ENCODE measurements at regions of chr2 and their contacts with region 1.

Region 1: DNA sequence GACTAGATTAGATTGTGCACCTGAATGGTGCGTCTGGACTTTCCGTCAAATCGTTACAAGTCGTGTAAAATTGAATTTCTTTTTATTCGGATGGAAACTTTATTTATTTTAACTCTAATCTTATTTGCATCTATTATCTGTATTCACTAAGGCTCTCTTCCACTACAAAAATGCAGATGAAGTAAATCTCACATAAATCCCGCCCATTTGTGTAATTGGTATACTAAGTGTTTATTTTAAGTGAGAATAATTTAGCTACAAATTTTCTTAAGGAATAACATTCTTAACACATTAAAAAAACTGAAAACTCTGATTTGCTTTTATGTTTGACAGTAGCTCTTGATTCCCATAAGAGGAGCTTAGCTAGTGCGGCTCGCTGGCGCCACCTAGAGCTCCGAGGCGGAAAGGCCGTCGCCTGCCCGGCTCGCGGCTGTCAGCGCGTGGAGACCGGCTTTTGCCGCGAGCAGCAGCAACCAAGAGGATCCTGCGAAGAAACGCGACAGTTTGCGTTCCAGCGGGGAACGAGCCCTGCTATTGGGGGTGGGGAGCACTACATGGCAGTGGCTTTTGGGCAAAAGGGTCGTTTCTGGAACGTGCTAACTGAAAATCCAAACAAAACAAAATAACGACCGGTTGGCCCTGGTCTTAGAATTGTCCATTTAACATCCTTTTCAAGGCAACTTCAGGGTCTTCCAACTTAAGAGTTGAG is 6.7 kb downstream of the SP9 start:
- DNase-seq: peak; percentile 41
- ATAC-seq: peak; percentile 93
- H3K4me3 ChIP-seq: peak overlapping the region; percentile 36 to 55
- H3K27ac ChIP-seq: no peak overlapping the region
- H3K4me1 ChIP-seq: peaks cover 10% of the 10 kb centered on the region
- H3K27me3 ChIP-seq: no peaks in the 10 kb centered on the region
- CTCF ChIP-seq: peak; percentile 98

Region 2: DNA sequence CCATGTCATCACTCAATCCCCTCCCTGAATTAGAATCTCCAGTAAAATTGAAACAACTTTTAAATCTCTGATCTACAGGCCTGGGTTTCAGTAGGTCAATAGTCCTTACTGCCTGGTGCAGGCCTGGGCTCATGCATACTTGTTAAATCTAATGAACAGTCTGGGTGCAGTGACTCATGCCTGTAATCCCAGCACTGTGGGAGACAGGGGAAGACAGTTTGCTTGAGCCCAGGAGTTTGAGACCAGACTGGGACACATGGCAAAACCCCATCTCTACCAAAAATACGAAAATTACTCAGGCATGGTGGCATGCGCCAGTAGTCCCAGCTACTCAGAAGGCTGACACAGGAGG is 281.6 kb before region 1 on chr2:
- CTCF ChIA-PET with region 1: interaction called, 3 read pairs
- POLR2A ChIA-PET with region 1: interaction called, 6 read pairs
- in situ Hi-C with region 1: no loop called
- intact Hi-C with region 1: loop called (anchors 10 kb)
- DNase-seq: no peak
- ATAC-seq: no peak
- H3K4me3 ChIP-seq: no peak overlapping the region
- H3K27ac ChIP-seq: no peak overlapping the region
- H3K4me1 ChIP-seq: no peaks in the 10 kb centered on the region
- H3K27me3 ChIP-seq: no peaks in the 10 kb centered on the region
- CTCF ChIP-seq: no peak

Region 3: DNA sequence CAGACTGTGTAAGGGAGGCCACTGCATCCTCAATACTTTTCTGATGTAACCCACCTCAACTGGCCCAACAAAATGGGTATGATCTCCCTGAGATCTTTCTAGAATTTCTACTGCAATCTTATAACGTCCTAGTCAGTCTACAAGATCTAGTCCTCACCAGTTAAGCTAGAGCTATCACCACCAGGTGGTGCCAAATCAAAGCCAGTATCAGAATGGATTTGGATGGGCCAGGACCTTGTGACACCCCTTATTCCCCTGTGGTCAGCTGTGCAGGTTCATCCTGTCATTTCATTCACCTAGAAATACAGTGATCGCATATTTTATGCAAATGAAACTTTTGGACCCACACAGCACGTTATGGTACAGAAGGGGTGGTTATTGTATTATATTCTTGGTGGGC is 183.4 kb before region 1 on chr2:
- CTCF ChIA-PET with region 1: interaction called, 8 read pairs
- POLR2A ChIA-PET with region 1: no interaction called
- in situ Hi-C with region 1: no loop called
- intact Hi-C with region 1: loop called (anchors 1 kb)
- DNase-seq: no peak
- ATAC-seq: peak; percentile 87
- H3K4me3 ChIP-seq: no peak overlapping the region
- H3K27ac ChIP-seq: no peak overlapping the region
- H3K4me1 ChIP-seq: no peaks in the 10 kb centered on the region
- H3K27me3 ChIP-seq: no peaks in the 10 kb centered on the region
- CTCF ChIP-seq: peak; percentile 77